CD8-positive, alpha-beta T cell (primary cell): ENCODE measurements at regions of chr14 and their contacts with region 1.

Region 1: GRCh38 chr14:73223049-73223448 is 14.3 kb upstream of the PAPLN start:
- DNase-seq: no peak
- ATAC-seq: no peak
- H3K4me3 ChIP-seq: no peak overlapping the region
- H3K4me3 Mint-ChIP-seq: no peak overlapping the region
- H3K27ac ChIP-seq: no peak overlapping the region
- H3K27ac Mint-ChIP-seq: peak overlapping the region; percentile 35
- H3K4me1 ChIP-seq: no peaks in the 10 kb centered on the region
- H3K4me1 Mint-ChIP-seq: no peaks in the 10 kb centered on the region
- H3K27me3 ChIP-seq: no peaks in the 10 kb centered on the region
- H3K27me3 Mint-ChIP-seq: no peaks in the 10 kb centered on the region
- CTCF ChIP-seq: no peak

Region 2: GRCh38 chr14:73188501-73188942 is 34.5 kb before region 1 on chr14:
- CTCF ChIA-PET with region 1: no interaction called
- POLR2A ChIA-PET with region 1: no interaction called
- intact Hi-C with region 1: loop called in 1 of 2 experiments (anchors 1 kb)
- DNase-seq: no peak
- ATAC-seq: no peak
- H3K4me3 ChIP-seq: no peak overlapping the region
- H3K4me3 Mint-ChIP-seq: no peak overlapping the region
- H3K27ac ChIP-seq: no peak overlapping the region
- H3K27ac Mint-ChIP-seq: no peak overlapping the region
- H3K4me1 ChIP-seq: no peaks in the 10 kb centered on the region
- H3K4me1 Mint-ChIP-seq: no peaks in the 10 kb centered on the region
- H3K27me3 ChIP-seq: no peaks in the 10 kb centered on the region
- H3K27me3 Mint-ChIP-seq: no peaks in the 10 kb centered on the region
- CTCF ChIP-seq: no peak

Region 3: GRCh38 chr14:73295198-73295796 is 72.2 kb after region 1 on chr14:
- CTCF ChIA-PET with region 1: no interaction called
- POLR2A ChIA-PET with region 1: no interaction called
- intact Hi-C with region 1: no loop called
- DNase-seq: peak in 3 of 9 experiments; percentile 7 to 59 (median 47)
- ATAC-seq: peak; percentile 38
- H3K4me3 ChIP-seq: no peak overlapping the region
- H3K4me3 Mint-ChIP-seq: no peak overlapping the region
- H3K27ac ChIP-seq: no peak overlapping the region
- H3K27ac Mint-ChIP-seq: no peak overlapping the region
- H3K4me1 ChIP-seq: no peaks in the 10 kb centered on the region
- H3K4me1 Mint-ChIP-seq: peaks cover 2% of the 10 kb centered on the region
- H3K27me3 ChIP-seq: no peaks in the 10 kb centered on the region
- H3K27me3 Mint-ChIP-seq: no peaks in the 10 kb centered on the region
- CTCF ChIP-seq: peak; percentile 72

Region 4: GRCh38 chr14:74217672-74218448 is 994.8 kb after region 1 on chr14:
- CTCF ChIA-PET with region 1: no interaction called
- POLR2A ChIA-PET with region 1: no interaction called
- intact Hi-C with region 1: no loop called
- DNase-seq: peak; percentile 56 to 82 (median 72)
- ATAC-seq: peak; percentile 99
- H3K4me3 ChIP-seq: peak overlapping the region in 1 of 2 experiments; percentile 13
- H3K4me3 Mint-ChIP-seq: peak overlapping the region; percentile 29
- H3K27ac ChIP-seq: no peak overlapping the region
- H3K27ac Mint-ChIP-seq: no peak overlapping the region
- H3K4me1 ChIP-seq: no peaks in the 10 kb centered on the region
- H3K4me1 Mint-ChIP-seq: peaks cover 2% of the 10 kb centered on the region
- H3K27me3 ChIP-seq: peaks cover 2 to 6% of the 10 kb centered on the region in 2 experiments
- H3K27me3 Mint-ChIP-seq: peaks cover 6% of the 10 kb centered on the region
- CTCF ChIP-seq: peak; percentile 76